Naive thymus-derived CD4-positive, alpha-beta T cell (primary cell): ENCODE measurements at regions of chr5 and their contacts with region 1.

Region 1: GRCh38 chr5:1666812-1667588 is 132.6 kb downstream of the MRPL36 start:
- DNase-seq: peak in 8 of 9 donors; percentile 40 to 73 (median 52)
- ATAC-seq: peak; percentile 63
- H3K4me3 ChIP-seq: no peak overlapping the region
- H3K4me3 Mint-ChIP-seq: peak overlapping the region in 7 of 10 donors; percentile 2 to 77 (median 52)
- H3K27ac ChIP-seq: no peak overlapping the region
- H3K27ac Mint-ChIP-seq: no peak overlapping the region
- H3K4me1 ChIP-seq: peaks cover 0 to 4% of the 10 kb centered on the region in 2 donors
- H3K4me1 Mint-ChIP-seq: peaks cover 0 to 22% (median 14%) of the 10 kb centered on the region in 7 donors
- H3K27me3 ChIP-seq: peaks cover 12 to 14% of the 10 kb centered on the region in 2 donors
- H3K27me3 Mint-ChIP-seq: peaks cover 42 to 70% (median 65%) of the 10 kb centered on the region in 5 donors

Region 2: GRCh38 chr5:1633605-1634336 is 33.2 kb before region 1 on chr5:
- CTCF ChIA-PET with region 1: no interaction called
- POLR2A ChIA-PET with region 1: no interaction called
- intact Hi-C with region 1: no loop called
- DNase-seq: peak; percentile 47 to 86 (median 63)
- ATAC-seq: peak; percentile 86
- H3K4me3 ChIP-seq: peak overlapping the region; percentile 83
- H3K4me3 Mint-ChIP-seq: peak overlapping the region; percentile 89 to 96 (median 92)
- H3K27ac ChIP-seq: peak overlapping the region; percentile 76
- H3K27ac Mint-ChIP-seq: peak overlapping the region; percentile 88 to 97 (median 91)
- H3K4me1 ChIP-seq: peaks cover 0 to 3% of the 10 kb centered on the region in 2 donors
- H3K4me1 Mint-ChIP-seq: peaks cover 15 to 46% (median 35%) of the 10 kb centered on the region in 7 donors
- H3K27me3 ChIP-seq: no peaks in the 10 kb centered on the region
- H3K27me3 Mint-ChIP-seq: peaks cover 0 to 8% (median 0%) of the 10 kb centered on the region in 5 donors

Region 3: DNA sequence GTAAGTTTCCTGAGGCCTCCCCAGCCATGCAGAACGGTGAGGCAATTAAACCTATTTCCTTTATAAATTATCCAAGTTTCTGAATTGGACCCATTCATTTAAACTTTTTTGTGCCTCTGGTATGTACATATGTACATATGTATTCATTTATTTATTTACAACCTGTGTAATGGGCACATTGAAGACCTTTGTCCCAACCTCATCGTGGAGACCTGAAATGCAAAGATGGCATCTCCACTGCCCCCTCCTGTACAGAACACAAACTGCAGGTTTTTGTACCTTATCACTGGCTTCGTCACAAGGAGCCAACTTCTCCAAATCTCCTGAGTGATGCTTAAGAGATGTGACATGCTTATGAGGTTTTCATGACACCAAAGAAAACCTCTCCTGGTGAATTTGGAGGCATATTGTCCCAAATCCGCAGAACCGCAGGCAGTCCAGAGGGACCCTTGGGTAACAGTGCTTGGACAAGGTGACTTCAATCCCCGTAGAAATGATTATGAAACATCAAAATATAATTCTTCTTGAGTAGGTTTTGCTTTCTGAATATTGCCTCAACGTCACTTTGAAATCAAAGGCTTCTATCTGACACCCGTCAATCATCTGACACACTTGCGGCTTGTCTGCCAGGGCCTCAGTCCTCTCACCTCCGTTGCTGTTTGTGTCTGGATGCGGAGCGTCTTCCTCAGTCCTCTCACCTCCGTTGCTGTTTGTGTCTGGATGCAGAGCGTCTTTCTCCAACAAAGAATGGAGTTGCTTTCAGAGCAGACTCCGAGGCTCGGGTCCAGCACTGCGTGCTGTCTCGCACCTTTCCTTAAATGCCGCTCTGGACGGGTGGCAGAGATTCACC is 350.8 kb after region 1 on chr5:
- CTCF ChIA-PET with region 1: interaction called, 3 read pairs
- POLR2A ChIA-PET with region 1: no interaction called
- intact Hi-C with region 1: loop called in 1 of 2 experiments (anchors 1 kb)
- DNase-seq: peak in 4 of 9 donors; percentile 7 to 23 (median 21)
- ATAC-seq: no peak
- H3K4me3 ChIP-seq: no peak overlapping the region
- H3K4me3 Mint-ChIP-seq: no peak overlapping the region
- H3K27ac ChIP-seq: no peak overlapping the region
- H3K27ac Mint-ChIP-seq: no peak overlapping the region
- H3K4me1 ChIP-seq: no peaks in the 10 kb centered on the region
- H3K4me1 Mint-ChIP-seq: no peaks in the 10 kb centered on the region
- H3K27me3 ChIP-seq: no peaks in the 10 kb centered on the region
- H3K27me3 Mint-ChIP-seq: peaks cover 0 to 29% (median 11%) of the 10 kb centered on the region in 5 donors

Region 4: GRCh38 chr5:2038321-2039179 is 371.6 kb after region 1 on chr5:
- CTCF ChIA-PET with region 1: no interaction called
- POLR2A ChIA-PET with region 1: no interaction called
- intact Hi-C with region 1: loop called in 1 of 2 experiments (anchors 1 kb)
- DNase-seq: peak; percentile 26 to 73 (median 58)
- ATAC-seq: peak; percentile 87
- H3K4me3 ChIP-seq: peak overlapping the region; percentile 42
- H3K4me3 Mint-ChIP-seq: peak overlapping the region; percentile 44 to 77 (median 71)
- H3K27ac ChIP-seq: no peak overlapping the region
- H3K27ac Mint-ChIP-seq: no peak overlapping the region
- H3K4me1 ChIP-seq: no peaks in the 10 kb centered on the region
- H3K4me1 Mint-ChIP-seq: no peaks in the 10 kb centered on the region
- H3K27me3 ChIP-seq: peaks cover 0 to 8% of the 10 kb centered on the region in 2 donors
- H3K27me3 Mint-ChIP-seq: peaks cover 20 to 73% (median 53%) of the 10 kb centered on the region in 5 donors